ENCODE measurements at regions of chr3 and their contacts with region 1.

Region 1: GRCh38 chr3:114056130-114057010 is at the starts of genes CCDC191 and QTRT2:
- DNase-seq: peak; percentile 98
- ATAC-seq: peak; percentile 100
- total RNA-seq, gene CCDC191: 1.1 TPM
- total RNA-seq, gene QTRT2: 4.9 TPM

Region 2: DNA sequence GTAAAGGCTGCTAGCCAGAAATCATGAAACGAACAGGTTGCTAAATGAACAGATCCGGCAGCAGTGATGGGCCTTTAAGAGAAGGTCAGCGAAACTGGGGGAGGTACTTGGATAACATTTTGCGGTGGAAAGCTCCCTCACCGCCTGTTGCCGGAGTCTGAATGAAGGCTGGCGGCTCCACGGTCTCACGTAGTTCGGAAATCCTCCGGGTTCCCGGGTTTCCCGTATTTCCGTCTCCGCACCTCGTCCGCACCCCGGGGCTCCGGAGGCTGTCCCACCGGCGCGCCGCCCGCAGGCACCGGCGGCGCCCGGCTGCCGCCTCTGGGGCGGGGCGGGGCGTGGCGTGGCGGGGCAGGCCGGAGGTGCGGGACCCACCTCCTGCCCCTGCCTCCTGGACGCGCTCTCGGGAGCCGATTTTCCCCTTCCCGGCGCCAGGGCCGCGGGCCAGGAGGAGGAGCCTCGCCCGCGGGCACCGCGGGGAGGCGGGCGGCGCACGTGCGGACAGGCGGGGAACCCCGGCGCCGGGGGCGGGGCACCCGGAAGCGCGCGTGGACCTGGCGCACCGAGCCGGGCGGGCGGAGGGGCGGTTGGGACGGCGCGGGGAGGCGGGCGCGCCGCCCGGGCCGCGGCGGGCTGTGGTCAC is 108.9 kb before region 1 on chr3 and contains the start of gene ZDHHC23:
- intact Hi-C with region 1: loop called (anchors 10 kb)
- DNase-seq: peak; percentile 84
- ATAC-seq: peak; percentile 94
- total RNA-seq, gene ZDHHC23: 3.0 TPM

Region 3: DNA sequence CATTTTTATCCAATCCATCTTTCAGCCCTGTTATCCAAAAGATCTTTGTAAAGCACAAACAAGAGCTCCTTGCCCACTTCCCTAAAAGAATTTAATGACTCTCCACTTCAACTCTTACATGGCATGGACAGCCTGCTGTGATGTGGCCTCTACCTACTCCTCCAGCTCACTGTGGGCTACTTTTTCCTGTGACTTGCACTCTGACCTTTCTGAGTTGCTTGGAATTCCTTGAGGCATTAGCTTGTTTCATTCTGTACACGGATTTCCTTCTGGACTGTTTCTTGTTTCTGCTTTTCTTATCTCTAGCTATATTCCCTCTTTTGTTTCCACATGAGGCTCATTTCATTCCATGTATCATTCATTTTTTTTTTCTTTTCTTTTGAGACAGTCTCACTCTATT is 15.4 kb after region 1 on chr3:
- intact Hi-C with region 1: no loop called
- DNase-seq: no peak
- ATAC-seq: no peak

Region 4: GRCh38 chr3:114104414-114104813 is 48.0 kb after region 1 on chr3:
- intact Hi-C with region 1: no loop called
- DNase-seq: no peak
- ATAC-seq: no peak